ENCODE measurements at regions of chr2 and their contacts with region 1.

Region 1: DNA sequence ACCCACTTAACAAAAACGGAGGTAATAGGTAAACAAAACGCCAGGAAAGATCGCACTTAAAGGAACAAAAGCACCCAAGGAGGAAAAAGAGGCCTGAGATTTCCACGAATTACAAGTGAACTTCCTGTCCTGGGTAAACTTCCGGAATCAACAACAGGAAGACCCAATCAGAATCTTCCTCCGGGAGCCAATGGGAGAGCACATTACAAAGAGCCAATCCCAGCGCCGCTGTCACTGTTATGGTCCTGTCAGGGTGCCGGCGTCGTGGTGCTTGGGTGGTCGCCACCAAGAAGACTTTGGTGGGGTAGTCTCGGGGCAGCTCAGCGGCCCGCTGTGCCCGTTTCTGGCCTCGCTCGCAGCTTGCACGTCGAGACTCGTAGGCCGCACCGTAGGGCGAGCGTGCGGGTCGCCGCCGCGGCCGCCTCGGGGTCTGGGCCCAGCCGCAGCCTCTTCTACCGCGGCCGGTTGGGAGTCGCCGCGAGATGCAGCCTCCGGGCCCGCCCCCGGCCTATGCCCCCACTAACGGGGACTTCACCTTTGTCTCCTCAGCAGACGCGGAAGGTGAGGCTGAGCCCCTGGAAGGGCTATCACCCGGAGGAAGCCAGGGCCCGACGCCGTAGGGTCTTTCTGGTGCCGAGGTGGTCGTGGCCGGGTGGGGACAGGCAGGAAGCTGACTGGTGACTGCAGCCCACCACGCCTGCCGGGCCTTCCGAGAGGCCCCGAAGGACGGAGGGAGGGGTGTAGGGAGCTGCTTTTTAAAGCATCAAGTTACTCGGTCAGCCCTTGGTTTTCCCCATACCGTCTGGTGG is at the start of gene YIPF4:
- DNase-seq: peak; percentile 90 to 93
- H3K4me3 ChIP-seq: peak within 1 kb of the TSS; percentile 77
- H3K4me3 Mint-ChIP-seq: peak within 1 kb of the TSS; percentile 83
- H3K27ac Mint-ChIP-seq: peak within 1 kb of the TSS; percentile 92
- H3K4me1 ChIP-seq: peaks cover 6% of the 10 kb centered on the region; the same call in 1 of the 2 replicates
- H3K4me1 Mint-ChIP-seq: no peaks in the 10 kb centered on the region
- H3K27me3 ChIP-seq: no peaks in the 10 kb centered on the region
- H3K27me3 Mint-ChIP-seq: no peaks in the 10 kb centered on the region
- CTCF ChIP-seq: no peak
- total RNA-seq, gene YIPF4: 46.4 and 60.2 TPM in 2 replicates

Region 2: DNA sequence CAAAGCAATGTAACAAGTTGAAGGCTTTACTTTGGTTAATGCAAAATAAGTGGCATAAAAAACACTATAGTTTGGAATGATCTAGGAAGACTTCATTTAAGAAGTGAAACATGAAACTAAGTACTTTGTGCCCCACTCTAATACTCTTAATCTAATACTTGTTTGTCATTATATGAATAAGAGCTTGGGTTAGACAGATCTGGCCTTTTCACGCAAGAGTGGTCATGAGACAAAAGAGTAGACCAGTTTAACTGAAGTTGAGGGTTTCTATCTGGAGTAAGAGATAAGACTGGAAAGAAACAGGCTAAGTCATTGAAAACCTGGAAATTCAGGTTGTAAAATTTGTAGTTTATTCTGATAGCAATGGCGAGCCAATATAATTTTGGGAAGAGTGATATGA is 109.4 kb before region 1 on chr2:
- CTCF ChIA-PET with region 1: no interaction called
- POLR2A ChIA-PET with region 1: interaction called, 10 read pairs
- intact Hi-C with region 1: no loop called
- DNase-seq: no peak
- H3K4me3 ChIP-seq: no peak overlapping the region
- H3K4me3 Mint-ChIP-seq: no peak overlapping the region
- H3K27ac Mint-ChIP-seq: no peak overlapping the region
- H3K4me1 ChIP-seq: peaks cover 10% of the 10 kb centered on the region; the same call in 1 of the 2 replicates
- H3K4me1 Mint-ChIP-seq: peaks cover 19% of the 10 kb centered on the region
- H3K27me3 ChIP-seq: no peaks in the 10 kb centered on the region
- H3K27me3 Mint-ChIP-seq: no peaks in the 10 kb centered on the region
- CTCF ChIP-seq: no peak

Region 3: DNA sequence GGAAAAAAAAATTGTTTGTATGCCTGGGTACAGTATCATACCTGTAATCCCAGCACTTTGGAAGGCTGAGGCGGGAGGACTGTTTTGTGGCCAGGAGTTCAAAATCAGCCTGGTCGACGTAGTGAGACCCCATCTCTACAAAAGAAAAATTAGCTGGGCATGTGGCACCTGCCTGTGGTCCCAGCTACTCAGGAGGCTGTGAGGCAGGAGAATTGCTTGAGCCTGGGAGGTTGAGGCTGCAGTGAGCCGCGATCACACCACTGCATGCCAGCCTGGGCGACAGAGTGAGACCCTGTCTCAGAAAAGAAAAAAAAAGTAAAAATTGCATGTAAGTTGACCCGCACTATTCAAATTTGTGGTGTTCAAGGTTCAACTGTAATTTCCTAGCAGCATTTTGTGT is 32.7 kb after region 1 on chr2:
- CTCF ChIA-PET with region 1: no interaction called
- POLR2A ChIA-PET with region 1: no interaction called
- intact Hi-C with region 1: no loop called
- DNase-seq: no peak
- H3K4me3 ChIP-seq: no peak overlapping the region
- H3K4me3 Mint-ChIP-seq: no peak overlapping the region
- H3K27ac Mint-ChIP-seq: no peak overlapping the region
- H3K4me1 ChIP-seq: no peaks in the 10 kb centered on the region
- H3K4me1 Mint-ChIP-seq: no peaks in the 10 kb centered on the region
- H3K27me3 ChIP-seq: no peaks in the 10 kb centered on the region
- H3K27me3 Mint-ChIP-seq: no peaks in the 10 kb centered on the region
- CTCF ChIP-seq: no peak

Region 4: DNA sequence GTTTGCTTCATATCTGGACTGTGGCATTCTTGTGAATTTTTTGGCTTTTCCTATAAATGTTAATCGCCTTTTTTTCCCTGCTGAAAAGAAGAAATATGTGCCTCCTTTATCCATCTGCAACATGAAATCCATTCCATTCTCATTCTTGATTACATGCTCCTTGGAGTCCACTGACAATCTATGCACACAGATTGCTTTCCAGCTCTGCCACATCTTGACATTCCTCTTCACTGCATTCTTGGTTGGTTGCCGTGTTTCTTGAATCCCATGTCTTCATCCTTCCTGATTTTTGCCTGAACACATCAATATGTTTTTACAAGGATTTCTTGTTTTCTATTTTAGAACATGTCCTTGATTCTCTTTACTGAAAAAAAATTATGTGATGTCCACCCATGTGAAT is 52.3 kb after region 1 on chr2:
- CTCF ChIA-PET with region 1: interaction called, 8 read pairs
- POLR2A ChIA-PET with region 1: no interaction called
- intact Hi-C with region 1: loop called (anchors 1 kb)
- DNase-seq: no peak
- H3K4me3 ChIP-seq: no peak overlapping the region
- H3K4me3 Mint-ChIP-seq: peak overlapping the region; percentile 46
- H3K27ac Mint-ChIP-seq: peak overlapping the region; percentile 18
- H3K4me1 ChIP-seq: peaks cover 28% of the 10 kb centered on the region
- H3K4me1 Mint-ChIP-seq: peaks cover 35% of the 10 kb centered on the region
- H3K27me3 ChIP-seq: no peaks in the 10 kb centered on the region
- H3K27me3 Mint-ChIP-seq: no peaks in the 10 kb centered on the region
- CTCF ChIP-seq: no peak

Region 5: GRCh38 chr2:32356735-32357644 is 79.1 kb after region 1 on chr2 and contains the start of gene BIRC6:
- CTCF ChIA-PET with region 1: no interaction called
- POLR2A ChIA-PET with region 1: no interaction called
- intact Hi-C with region 1: loop called (anchors 2 kb)
- DNase-seq: peak; percentile 99 to 100
- H3K4me3 ChIP-seq: peak within 1 kb of the TSS; percentile 100
- H3K4me3 Mint-ChIP-seq: peak within 1 kb of the TSS; percentile 82
- H3K27ac Mint-ChIP-seq: peak within 1 kb of the TSS; percentile 78
- H3K4me1 ChIP-seq: peaks cover 16% of the 10 kb centered on the region
- H3K4me1 Mint-ChIP-seq: peaks cover 30% of the 10 kb centered on the region
- H3K27me3 ChIP-seq: no peaks in the 10 kb centered on the region
- H3K27me3 Mint-ChIP-seq: no peaks in the 10 kb centered on the region
- CTCF ChIP-seq: no peak
- total RNA-seq, gene BIRC6: 96.7 and 100 TPM in 2 replicates